A549 (cell line): ENCODE measurements at regions of chr5 and their contacts with region 1.

Region 1: DNA sequence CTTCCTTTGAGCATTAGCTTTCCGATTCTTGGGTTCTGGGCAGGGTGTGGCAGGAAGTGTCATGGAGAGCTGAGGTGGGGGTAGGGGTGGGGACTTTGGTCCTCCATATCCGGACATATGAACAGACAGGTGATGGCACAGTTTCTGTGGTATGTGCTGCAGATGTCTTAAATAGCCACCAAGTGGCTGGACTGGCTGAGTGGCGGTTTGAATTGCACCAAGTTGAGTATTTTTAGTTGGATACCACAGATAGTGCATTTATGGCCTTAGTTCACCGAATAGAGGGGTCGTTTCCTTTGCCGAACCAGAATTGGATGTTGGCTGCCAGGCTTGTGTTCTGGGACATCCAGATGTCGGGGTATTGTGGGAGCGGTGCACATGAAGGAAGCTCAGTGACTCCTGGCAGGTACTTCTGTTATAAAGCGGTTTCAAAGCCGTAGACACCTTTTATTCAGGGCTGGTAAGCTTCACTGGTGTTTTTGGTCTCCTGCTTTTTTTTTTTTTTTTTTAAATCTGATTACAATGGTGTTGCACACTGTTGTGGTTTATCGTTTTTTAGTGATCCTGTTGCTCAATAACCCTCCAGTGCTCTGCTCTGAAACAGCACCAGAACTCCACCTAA is 15.1 kb upstream of the TNFAIP8 start:
- DNase-seq: no peak
- ATAC-seq: no peak
- H3K4me3 ChIP-seq: no peak overlapping the region
- H3K27ac ChIP-seq: no peak overlapping the region
- H3K4me1 ChIP-seq: peaks cover 11% of the 10 kb centered on the region; the same call in 1 of the 3 replicates
- CTCF ChIP-seq: no peak
- EP300 ChIP-seq: no peak
- POLR2A ChIP-seq: no peak
- RAD21 ChIP-seq: no peak

Region 2: DNA sequence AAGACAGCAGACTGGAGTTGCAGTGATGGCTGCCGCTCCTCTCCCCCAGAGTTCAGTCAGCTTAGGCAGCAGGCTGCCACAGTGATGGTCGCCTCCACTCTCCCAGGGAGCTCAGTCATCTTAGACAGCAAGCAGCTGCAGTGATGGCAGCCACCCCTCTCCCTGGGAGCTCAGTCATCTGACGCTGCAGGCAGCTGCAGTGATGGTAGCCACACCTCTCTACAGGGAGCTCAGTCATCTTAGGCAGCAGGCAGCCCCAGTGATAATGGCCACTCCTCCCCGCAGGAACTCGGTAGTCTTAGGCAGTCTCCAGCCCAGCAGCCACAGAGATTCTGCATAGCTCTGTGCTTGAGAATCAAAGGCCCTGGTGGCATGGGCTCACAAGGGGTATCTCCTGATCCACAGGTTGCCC is 935.1 kb before region 1 on chr5:
- CTCF ChIA-PET with region 1: no interaction called
- POLR2A ChIA-PET with region 1: no interaction called
- DNase-seq: no peak
- ATAC-seq: no peak
- H3K4me3 ChIP-seq: no peak overlapping the region
- H3K27ac ChIP-seq: no peak overlapping the region
- H3K4me1 ChIP-seq: no peaks in the 10 kb centered on the region
- CTCF ChIP-seq: no peak
- EP300 ChIP-seq: no peak
- POLR2A ChIP-seq: no peak
- RAD21 ChIP-seq: no peak

Region 3: DNA sequence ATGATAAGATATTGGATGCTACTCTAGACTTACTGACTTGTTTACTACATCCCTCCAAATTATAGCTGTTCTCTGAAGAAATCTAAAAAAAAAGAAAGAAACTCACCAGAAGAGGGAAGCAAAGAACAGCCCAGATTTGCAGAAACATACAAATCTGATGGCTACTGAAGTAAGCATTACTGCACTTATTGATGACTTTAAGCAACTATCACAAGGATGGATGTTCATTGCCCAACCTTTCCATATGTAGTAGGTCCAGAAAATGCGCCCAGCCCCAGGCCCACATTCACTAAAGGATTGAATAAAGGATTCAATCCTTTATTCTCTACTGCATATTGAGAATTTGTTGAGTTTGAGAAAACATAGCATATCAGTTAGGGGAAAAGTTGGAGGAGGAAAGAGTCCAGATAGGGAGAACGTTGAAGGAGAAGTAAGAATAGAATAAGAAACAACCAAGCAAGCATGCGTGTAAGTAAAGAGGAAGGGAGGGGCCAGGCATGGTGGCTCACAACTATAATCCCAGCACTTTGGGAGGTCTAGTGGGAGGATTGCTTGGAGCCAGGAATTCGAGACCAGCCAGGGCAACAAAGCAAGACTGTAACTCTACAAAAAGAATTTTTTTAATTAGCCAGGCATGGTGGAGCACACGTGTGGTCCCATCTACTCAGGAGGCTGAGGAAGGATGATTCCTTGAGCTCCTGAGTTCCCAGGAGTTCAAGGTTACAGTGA is 318.5 kb before region 1 on chr5:
- CTCF ChIA-PET with region 1: interaction called, 15 read pairs
- POLR2A ChIA-PET with region 1: no interaction called
- DNase-seq: peak; percentile 18 to 55
- ATAC-seq: peak; percentile 84 to 90
- H3K4me3 ChIP-seq: no peak overlapping the region
- H3K27ac ChIP-seq: no peak overlapping the region
- H3K4me1 ChIP-seq: peaks cover 14% of the 10 kb centered on the region
- CTCF ChIP-seq: peak; percentile 71
- EP300 ChIP-seq: no peak
- POLR2A ChIP-seq: no peak
- RAD21 ChIP-seq: peak; percentile 83 to 85

Region 4: DNA sequence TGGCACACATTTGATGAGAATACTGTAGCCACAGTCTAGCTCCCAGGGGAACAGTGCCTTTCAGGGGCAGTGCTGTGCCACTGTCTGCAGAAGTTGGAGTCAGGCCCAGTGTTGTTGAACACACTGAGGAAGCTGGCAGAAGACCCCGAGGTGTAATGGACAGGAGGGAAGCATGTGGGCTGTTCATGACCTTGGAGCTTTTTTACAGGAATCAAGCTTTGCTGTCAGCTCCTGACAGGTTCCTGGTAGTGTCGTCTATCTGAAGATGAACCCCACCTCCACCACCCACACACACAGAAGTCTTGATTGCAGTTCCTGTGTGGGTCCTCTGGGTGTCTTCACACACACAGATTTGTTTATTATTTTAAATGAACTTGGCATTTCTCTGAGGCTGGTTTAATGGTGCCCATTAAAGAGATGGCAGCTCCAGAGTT is 25.2 kb before region 1 on chr5:
- CTCF ChIA-PET with region 1: interaction called, 15 read pairs
- POLR2A ChIA-PET with region 1: no interaction called
- DNase-seq: peak; percentile 67 to 70
- ATAC-seq: peak; percentile 91 to 94
- H3K4me3 ChIP-seq: no peak overlapping the region
- H3K27ac ChIP-seq: peak overlapping the region; percentile 32 to 77; a peak in 4 of 6 replicates
- H3K4me1 ChIP-seq: peaks cover 32% of the 10 kb centered on the region
- CTCF ChIP-seq: peak; percentile 28; the same call in 2 of the 3 replicates
- EP300 ChIP-seq: no peak
- POLR2A ChIP-seq: no peak
- RAD21 ChIP-seq: peak; percentile 46 to 50; a peak in 2 of 5 replicates

Region 5: GRCh38 chr5:119373449-119373858 is 32.7 kb after region 1 on chr5:
- CTCF ChIA-PET with region 1: no interaction called
- POLR2A ChIA-PET with region 1: no interaction called
- DNase-seq: no peak
- ATAC-seq: no peak
- H3K4me3 ChIP-seq: no peak overlapping the region
- H3K27ac ChIP-seq: no peak overlapping the region
- H3K4me1 ChIP-seq: no peaks in the 10 kb centered on the region
- CTCF ChIP-seq: no peak
- EP300 ChIP-seq: no peak
- POLR2A ChIP-seq: no peak
- RAD21 ChIP-seq: no peak